SK-N-SH (cell line): ENCODE measurements at regions of chrX and their contacts with region 1.

Region 1: GRCh38 chrX:11137543-11138139 is 26.5 kb downstream of the HCCS start:
- DNase-seq: peak; percentile 39
- H3K4me3 ChIP-seq: no peak overlapping the region
- H3K27ac ChIP-seq: no peak overlapping the region
- H3K4me1 ChIP-seq: peaks cover 0 to 3% of the 10 kb centered on the region in 2 experiments; a peak in 1 of 4 replicates
- H3K27me3 ChIP-seq: no peaks in the 10 kb centered on the region; the same call in 1 of the 2 replicates
- CTCF ChIP-seq: peak; percentile 84
- EP300 ChIP-seq: no peak
- RAD21 ChIP-seq: peak; percentile 57

Region 2: DNA sequence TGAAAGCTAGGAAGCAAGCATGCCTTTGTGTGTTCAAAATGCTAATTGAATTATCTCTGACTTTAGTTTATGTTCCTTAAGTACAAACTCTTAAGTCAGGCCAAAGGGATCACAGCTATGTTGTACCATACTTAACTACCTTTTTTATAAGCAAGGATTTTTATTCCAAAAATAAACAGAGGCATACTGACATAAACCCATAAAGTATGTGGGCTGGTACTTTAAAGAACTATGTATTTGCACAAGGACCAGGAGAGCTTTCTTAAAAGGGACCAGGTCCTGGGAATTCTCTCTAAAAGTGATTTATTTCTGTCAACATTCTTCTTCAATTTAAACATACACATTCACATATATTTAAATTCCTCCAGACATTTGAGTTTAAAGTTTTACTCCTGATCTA is 84.3 kb before region 1 on chrX:
- CTCF ChIA-PET with region 1: no interaction called
- POLR2A ChIA-PET with region 1: no interaction called
- DNase-seq: no peak
- H3K4me3 ChIP-seq: no peak overlapping the region
- H3K27ac ChIP-seq: no peak overlapping the region
- H3K4me1 ChIP-seq: no peaks in the 10 kb centered on the region
- H3K27me3 ChIP-seq: no peaks in the 10 kb centered on the region
- CTCF ChIP-seq: no peak
- EP300 ChIP-seq: no peak
- RAD21 ChIP-seq: no peak

Region 3: GRCh38 chrX:11125060-11125459 is 12.6 kb before region 1 on chrX:
- CTCF ChIA-PET with region 1: interaction called, 23 read pairs
- POLR2A ChIA-PET with region 1: no interaction called
- DNase-seq: no peak
- H3K4me3 ChIP-seq: no peak overlapping the region
- H3K27ac ChIP-seq: no peak overlapping the region
- H3K4me1 ChIP-seq: no peaks in the 10 kb centered on the region
- H3K27me3 ChIP-seq: no peaks in the 10 kb centered on the region
- CTCF ChIP-seq: no peak
- EP300 ChIP-seq: no peak
- RAD21 ChIP-seq: no peak

Region 4: DNA sequence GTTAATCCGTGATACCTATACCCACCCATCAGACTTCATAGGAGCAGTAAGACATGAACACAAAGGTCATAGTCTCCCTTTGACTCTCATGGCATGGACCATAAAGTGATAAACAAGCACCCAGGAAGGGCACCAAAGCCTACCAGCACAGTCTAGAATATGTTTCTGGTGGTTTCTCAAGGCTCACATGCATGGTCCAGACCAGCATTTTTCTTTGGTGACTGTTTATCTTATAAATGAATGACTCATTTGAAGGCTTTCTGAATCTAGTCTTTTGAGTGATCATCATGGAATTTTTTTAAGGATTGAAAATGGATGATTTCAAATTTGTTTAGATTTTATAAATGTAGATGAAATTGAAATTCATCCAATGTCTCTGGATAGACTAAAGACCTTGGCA is 123.6 kb after region 1 on chrX:
- CTCF ChIA-PET with region 1: no interaction called
- POLR2A ChIA-PET with region 1: no interaction called
- DNase-seq: no peak
- H3K4me3 ChIP-seq: no peak overlapping the region
- H3K27ac ChIP-seq: peak overlapping the region in 1 of 2 experiments; percentile 61; a peak in 1 of 4 replicates
- H3K4me1 ChIP-seq: no peaks in the 10 kb centered on the region
- H3K27me3 ChIP-seq: no peaks in the 10 kb centered on the region
- CTCF ChIP-seq: no peak
- EP300 ChIP-seq: peak in 1 of 2 experiments; percentile 24; a peak in 1 of 4 replicates
- RAD21 ChIP-seq: no peak